BJ (cell line): ENCODE measurements at regions of chr2 and their contacts with region 1.

Region 1: GRCh38 chr2:151792589-151792988 is 35.6 kb downstream of the ARL5A start:
- DNase-seq: no peak
- H3K4me3 ChIP-seq: no peak overlapping the region
- H3K27me3 ChIP-seq: no peaks in the 10 kb centered on the region
- CTCF ChIP-seq: no peak

Region 2: GRCh38 chr2:151781642-151782041 is 10.9 kb before region 1 on chr2:
- CTCF ChIA-PET with region 1: interaction called, 3 read pairs
- POLR2A ChIA-PET with region 1: interaction called, 21 read pairs
- DNase-seq: no peak
- H3K4me3 ChIP-seq: no peak overlapping the region
- H3K27me3 ChIP-seq: no peaks in the 10 kb centered on the region
- CTCF ChIP-seq: no peak